Activated CD4-positive, alpha-beta T cell treated with anti-CD3 and anti-CD28 coated beads, Interleukin-2, amount 10 ng/mL, durations not matched to agents 7 days and 5 days (primary cell): ENCODE measurements at regions of chr17 and their contacts with region 1.

Region 1: DNA sequence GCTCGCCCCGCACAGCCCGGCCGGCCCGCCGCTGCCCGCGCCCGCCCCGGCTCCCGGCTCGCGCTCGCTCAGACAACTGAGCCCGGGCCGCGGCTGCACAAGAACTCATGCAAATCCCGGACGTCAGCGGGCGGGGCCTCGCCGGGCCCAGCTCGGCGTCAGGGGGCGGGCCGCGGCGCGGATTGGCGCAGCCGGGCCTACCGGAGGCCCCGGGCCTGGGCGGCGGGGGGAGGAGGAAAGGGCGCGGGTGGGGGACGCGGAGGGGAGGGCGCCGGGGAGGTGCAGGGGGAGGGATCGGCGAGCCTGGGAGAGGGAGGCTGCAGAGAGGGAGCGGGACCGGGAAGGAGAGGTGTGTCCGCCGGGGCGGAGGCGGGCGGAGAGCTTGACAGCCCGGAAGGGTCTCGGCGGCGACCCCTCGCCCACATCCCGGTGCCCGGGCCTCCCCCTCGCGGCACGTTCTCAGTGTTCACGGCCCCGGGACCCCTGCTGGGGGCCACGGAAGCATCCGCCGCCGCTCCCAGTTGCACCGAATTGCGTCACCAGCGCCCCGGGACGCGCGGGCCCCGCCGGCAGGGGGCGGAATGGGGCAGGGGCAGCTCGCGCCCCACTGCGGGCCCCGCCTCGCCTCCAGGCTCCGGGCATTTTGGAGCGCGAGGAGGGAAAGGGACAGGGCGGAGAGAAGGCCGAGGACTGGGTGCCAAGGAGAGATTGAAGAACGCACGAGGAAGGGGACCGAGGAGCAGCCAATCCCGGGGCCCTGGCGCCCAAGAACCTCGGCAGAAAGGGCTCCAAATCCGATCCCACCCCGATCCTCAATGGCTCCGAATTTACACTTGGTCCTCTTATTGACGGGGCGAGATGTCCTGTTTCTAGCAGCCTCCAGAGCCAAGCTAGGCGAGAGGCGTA is at the start of gene CBX4:
- DNase-seq: peak; percentile 93
- H3K4me3 Mint-ChIP-seq: peak within 1 kb of the TSS; percentile 91
- H3K27ac Mint-ChIP-seq: peak within 1 kb of the TSS; percentile 94
- H3K4me1 Mint-ChIP-seq: peaks cover 43% of the 10 kb centered on the region
- H3K27me3 Mint-ChIP-seq: peaks cover 34% of the 10 kb centered on the region
- total RNA-seq, gene CBX4: 35.0 TPM

Region 2: DNA sequence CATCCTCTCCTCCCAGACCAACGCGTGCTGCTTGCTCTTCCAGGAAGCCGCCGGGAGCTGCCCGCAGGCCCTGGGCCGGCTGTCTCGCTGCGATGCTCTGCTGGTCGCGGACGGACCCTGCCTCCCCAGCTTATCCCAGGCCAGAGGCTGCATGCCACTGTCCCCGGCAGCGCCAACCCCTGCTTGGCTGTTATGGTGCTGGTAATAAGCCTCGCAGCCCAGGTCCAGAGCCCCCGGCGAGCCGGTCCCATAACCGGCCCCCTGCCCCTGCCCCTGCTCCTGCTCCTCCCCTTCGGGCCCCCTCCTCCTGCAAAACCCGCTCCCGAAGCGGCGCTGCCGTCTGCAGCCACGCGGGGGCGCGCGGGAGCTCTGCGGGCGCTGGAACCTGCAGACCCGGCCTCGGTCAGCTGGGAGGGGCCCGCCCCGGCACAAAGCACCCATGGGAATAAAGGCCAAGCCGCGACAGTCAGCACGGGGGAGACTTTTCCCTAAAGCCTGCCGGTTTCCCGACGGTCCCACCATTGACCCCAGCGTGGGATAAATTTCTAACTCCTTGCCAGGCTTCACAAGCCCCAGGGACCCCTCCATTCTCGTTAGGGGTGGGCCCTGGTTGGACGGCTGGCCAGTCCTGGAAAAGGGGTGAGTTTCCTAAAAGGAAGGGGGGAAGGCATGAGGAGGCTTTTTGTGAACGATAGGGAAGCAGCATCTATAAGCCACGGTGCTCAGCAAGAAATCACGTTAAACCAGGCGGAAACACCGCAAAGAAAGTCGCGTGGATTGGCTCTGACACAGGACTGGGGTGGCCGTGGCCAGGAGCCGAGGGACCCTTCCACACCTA is 97.6 kb before region 1 on chr17:
- CTCF ChIA-PET with region 1: interaction called, 11 read pairs
- POLR2A ChIA-PET with region 1: no interaction called
- DNase-seq: peak; percentile 75
- H3K4me3 Mint-ChIP-seq: no peak overlapping the region
- H3K27ac Mint-ChIP-seq: no peak overlapping the region
- H3K4me1 Mint-ChIP-seq: peaks cover 17% of the 10 kb centered on the region
- H3K27me3 Mint-ChIP-seq: peaks cover 31% of the 10 kb centered on the region

Region 3: DNA sequence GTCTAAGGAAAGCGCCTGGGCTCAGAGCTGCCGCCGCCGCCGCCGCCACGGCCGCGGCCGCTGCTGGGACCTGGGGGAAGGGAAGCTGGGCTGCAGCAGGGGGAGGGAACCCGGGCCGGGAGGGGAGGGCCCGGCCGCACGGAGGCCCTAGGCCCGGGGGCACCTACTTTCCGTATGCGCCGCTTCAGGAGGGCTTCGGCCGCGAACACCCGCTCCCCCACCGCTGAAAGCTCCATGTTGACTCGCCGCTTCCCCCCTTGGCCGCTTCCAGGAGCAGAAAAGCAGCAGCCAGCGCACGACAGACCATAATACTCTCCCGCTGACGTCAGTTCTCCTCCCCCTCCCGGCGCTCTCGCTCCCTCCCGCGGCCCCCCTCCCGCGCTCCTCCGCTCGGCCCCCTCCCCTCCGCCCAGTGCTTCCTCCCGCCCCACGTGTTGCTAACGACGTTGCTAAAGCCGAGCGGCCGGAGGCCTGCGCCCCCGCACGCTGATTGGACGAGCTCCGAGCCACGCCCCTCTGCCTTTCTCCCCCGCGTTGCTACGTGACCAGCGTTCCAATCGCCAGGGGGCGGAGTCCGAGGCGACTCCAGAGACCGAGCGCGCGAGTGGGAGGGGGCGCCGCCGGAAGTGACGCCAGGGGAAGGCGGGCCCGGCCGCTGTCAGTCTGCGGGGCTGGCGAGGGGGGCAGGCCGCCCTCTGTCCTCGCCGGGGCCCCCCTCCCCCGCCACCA is 42.7 kb before region 1 on chr17 and contains the start of gene CBX8:
- CTCF ChIA-PET with region 1: interaction called, 257 read pairs
- POLR2A ChIA-PET with region 1: interaction called, 6 read pairs
- DNase-seq: peak; percentile 100
- H3K4me3 Mint-ChIP-seq: peak within 1 kb of the TSS; percentile 85
- H3K27ac Mint-ChIP-seq: peak within 1 kb of the TSS; percentile 88
- H3K4me1 Mint-ChIP-seq: peaks cover 31% of the 10 kb centered on the region
- H3K27me3 Mint-ChIP-seq: peaks cover 50% of the 10 kb centered on the region
- total RNA-seq, gene CBX8: 4.3 to 6.4 TPM

Region 4: GRCh38 chr17:79818026-79818758 is 21.4 kb before region 1 on chr17:
- CTCF ChIA-PET with region 1: interaction called, 257 read pairs
- POLR2A ChIA-PET with region 1: no interaction called
- DNase-seq: no peak
- H3K4me3 Mint-ChIP-seq: no peak overlapping the region
- H3K27ac Mint-ChIP-seq: no peak overlapping the region
- H3K4me1 Mint-ChIP-seq: peaks cover 6% of the 10 kb centered on the region
- H3K27me3 Mint-ChIP-seq: peaks cover 59% of the 10 kb centered on the region

Region 5: GRCh38 chr17:79826204-79826680 is 13.4 kb before region 1 on chr17:
- CTCF ChIA-PET with region 1: interaction called, 10 read pairs
- POLR2A ChIA-PET with region 1: no interaction called
- DNase-seq: no peak
- H3K4me3 Mint-ChIP-seq: no peak overlapping the region
- H3K27ac Mint-ChIP-seq: peak overlapping the region; percentile 52
- H3K4me1 Mint-ChIP-seq: peaks cover 28% of the 10 kb centered on the region
- H3K27me3 Mint-ChIP-seq: peaks cover 15% of the 10 kb centered on the region

Region 6: DNA sequence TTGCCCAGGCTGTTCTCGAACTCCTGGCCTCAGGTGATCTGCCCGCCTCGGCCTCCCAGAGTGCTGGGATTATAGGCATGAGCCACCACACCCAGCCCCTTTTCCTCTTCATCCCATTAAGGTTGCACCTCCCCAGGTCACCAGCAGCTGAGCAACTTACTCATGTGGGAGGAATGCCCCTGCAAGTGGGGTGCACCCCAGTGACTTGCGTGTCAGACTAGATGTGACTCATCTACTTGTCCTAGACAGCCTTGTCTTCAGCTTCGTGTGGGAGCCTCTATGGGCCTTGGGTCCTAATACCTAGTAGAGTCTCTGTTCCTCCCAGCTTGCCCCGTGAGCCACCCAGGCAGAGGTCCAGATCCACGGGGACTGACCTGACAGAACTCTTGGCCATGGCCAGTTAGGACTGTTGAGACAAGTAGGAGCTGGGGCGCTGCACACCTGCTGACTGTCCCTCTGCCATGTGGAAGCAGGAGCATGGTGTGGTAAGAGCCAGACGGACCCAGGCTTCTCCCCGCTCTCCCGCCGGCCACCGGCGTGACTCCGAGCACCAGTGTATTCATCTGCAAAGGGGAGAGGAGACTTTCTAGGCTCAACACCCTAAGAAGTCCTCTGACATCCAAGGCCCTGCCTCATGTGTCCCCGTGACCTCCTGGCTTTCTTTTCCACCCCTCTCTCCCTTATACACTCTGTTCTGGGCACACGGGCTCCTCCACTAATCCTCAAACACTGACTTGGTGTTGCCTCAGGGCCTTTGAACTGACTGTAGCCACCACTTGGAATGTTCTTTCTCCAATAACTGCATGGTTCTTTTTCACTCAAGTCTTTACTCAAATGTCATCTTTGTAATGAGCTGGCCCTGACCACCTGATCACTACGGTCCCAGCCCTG is 11.2 kb after region 1 on chr17:
- CTCF ChIA-PET with region 1: interaction called, 31 read pairs
- POLR2A ChIA-PET with region 1: no interaction called
- DNase-seq: no peak
- H3K4me3 Mint-ChIP-seq: no peak overlapping the region
- H3K27ac Mint-ChIP-seq: no peak overlapping the region
- H3K4me1 Mint-ChIP-seq: peaks cover 8% of the 10 kb centered on the region
- H3K27me3 Mint-ChIP-seq: peaks cover 25% of the 10 kb centered on the region